ENCODE measurements at regions of chr2 and their contacts with region 1.

Region 1: DNA sequence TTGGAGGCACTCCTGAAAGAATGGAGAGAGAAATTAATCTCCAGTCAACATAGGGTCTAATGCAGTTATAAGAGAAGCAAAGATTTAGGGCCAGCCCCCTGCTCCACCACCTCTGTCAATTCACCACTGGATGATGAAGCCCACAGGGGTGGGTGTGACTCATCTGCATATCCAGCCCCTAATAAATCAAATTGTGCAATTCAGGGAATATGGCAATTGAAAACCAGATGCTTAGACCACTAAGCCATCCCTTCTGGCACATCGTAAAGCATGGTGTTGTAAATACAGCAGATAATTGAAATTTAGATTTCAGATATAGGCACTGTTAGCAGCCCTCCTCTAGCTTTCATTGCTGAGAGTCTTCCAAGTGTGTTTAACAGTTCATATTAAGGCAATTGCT is 541.4 kb downstream of the PARD3B start:
- DNase-seq: no peak
- ATAC-seq: no peak
- H3K4me3 ChIP-seq: no peak overlapping the region
- H3K4me3 Mint-ChIP-seq: no peak overlapping the region
- H3K27ac ChIP-seq: no peak overlapping the region
- H3K27ac Mint-ChIP-seq: no peak overlapping the region
- H3K4me1 ChIP-seq: no peaks in the 10 kb centered on the region
- H3K4me1 Mint-ChIP-seq: peaks cover 12% of the 10 kb centered on the region
- H3K27me3 ChIP-seq: no peaks in the 10 kb centered on the region
- H3K27me3 Mint-ChIP-seq: no peaks in the 10 kb centered on the region
- CTCF ChIP-seq: no peak

Region 2: DNA sequence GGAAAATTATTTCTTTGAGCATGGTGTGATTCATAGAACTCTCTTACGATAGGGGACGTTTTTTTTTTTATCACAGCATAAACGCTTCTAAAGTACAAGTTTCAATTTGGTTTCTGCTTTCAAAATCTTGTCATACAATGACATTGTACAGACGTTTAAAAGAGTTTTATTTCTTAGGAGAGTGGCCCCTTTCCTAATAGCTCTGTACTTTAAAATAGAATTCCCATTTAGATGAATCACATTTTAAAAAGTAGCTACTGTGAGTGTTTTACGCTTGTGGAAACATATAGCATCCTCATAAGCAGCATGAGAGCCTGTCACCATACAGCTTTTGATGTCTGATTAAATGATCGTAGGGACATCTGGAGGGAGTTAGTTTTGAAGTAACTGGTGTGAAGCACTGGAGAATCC is 30.5 kb before region 1 on chr2:
- CTCF ChIA-PET with region 1: no interaction called
- POLR2A ChIA-PET with region 1: no interaction called
- intact Hi-C with region 1: loop called in 1 of 2 experiments (anchors 5 kb)
- DNase-seq: no peak
- ATAC-seq: no peak
- H3K4me3 ChIP-seq: no peak overlapping the region
- H3K4me3 Mint-ChIP-seq: no peak overlapping the region
- H3K27ac ChIP-seq: no peak overlapping the region
- H3K27ac Mint-ChIP-seq: no peak overlapping the region
- H3K4me1 ChIP-seq: no peaks in the 10 kb centered on the region
- H3K4me1 Mint-ChIP-seq: peaks cover 4% of the 10 kb centered on the region
- H3K27me3 ChIP-seq: no peaks in the 10 kb centered on the region
- H3K27me3 Mint-ChIP-seq: no peaks in the 10 kb centered on the region
- CTCF ChIP-seq: no peak